Natural killer cell (primary cell): ENCODE measurements at regions of chr1 and their contacts with region 1.

Region 1: GRCh38 chr1:6602669-6603237 is at the start of gene KLHL21:
- DNase-seq: peak; percentile 90 to 92
- ATAC-seq: peak; percentile 65 to 87 (median 73)
- H3K4me3 ChIP-seq: peak within 1 kb of the TSS; percentile 82
- H3K4me3 Mint-ChIP-seq: peak within 1 kb of the TSS; percentile 98
- H3K27ac ChIP-seq: peak within 1 kb of the TSS; percentile 96
- H3K27ac Mint-ChIP-seq: peak within 1 kb of the TSS; percentile 93 to 99
- H3K4me1 ChIP-seq: peaks cover 44% of the 10 kb centered on the region
- H3K4me1 Mint-ChIP-seq: peaks cover 42% of the 10 kb centered on the region in 2 donors
- H3K27me3 ChIP-seq: no peaks in the 10 kb centered on the region
- H3K27me3 Mint-ChIP-seq: no peaks in the 10 kb centered on the region
- CTCF ChIP-seq: no peak
- total RNA-seq, gene KLHL21: 23.5 to 37.8 (median 28.9) TPM

Region 2: DNA sequence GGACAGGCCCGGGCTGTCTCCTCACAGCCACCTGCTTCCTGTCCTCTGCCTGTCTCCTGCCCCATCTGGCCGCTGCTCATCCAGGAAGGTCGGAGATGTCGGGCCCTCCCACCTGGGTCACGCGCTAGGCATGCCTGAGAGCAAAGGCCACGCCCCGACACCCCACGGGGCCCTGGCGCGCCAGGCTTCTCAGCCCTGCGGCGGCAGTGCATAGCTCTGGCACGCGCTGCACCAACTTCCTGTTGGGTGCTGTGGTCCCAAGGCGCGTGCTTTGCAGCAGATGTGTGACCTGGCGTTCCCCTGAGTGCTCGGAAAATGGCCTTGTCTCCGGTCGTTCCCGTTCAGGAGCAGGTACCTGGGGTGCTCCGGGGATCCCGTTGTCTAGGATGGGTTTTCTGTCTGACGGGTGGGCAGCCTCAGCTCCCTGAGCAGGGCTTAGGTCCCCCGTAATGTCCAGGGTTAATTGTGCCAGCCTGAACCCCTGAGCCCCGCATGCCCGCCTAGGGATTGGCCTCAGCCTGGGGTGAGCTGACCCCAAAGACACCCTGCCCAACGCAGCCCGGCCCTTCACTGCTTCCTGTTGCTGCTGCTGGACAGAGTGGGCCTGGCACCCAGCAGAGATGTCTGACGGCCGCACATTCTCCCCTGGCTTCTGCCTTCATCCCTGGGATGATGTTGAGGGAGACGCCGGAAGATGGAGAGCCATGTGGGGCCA is 576.5 kb before region 1 on chr1:
- intact Hi-C with region 1: loop called (anchors 5 kb)
- DNase-seq: peak; percentile 92 to 97
- ATAC-seq: peak; percentile 67 to 89 (median 84)
- H3K4me3 ChIP-seq: peak overlapping the region; percentile 55
- H3K4me3 Mint-ChIP-seq: peak overlapping the region; percentile 93
- H3K27ac ChIP-seq: peak overlapping the region; percentile 95
- H3K27ac Mint-ChIP-seq: peak overlapping the region; percentile 70 to 100
- H3K4me1 ChIP-seq: peaks cover 66% of the 10 kb centered on the region
- H3K4me1 Mint-ChIP-seq: peaks cover 58 to 72% of the 10 kb centered on the region in 2 donors
- H3K27me3 ChIP-seq: no peaks in the 10 kb centered on the region
- H3K27me3 Mint-ChIP-seq: peaks cover 0 to 3% of the 10 kb centered on the region in 2 donors
- CTCF ChIP-seq: no peak

Region 3: GRCh38 chr1:6245086-6245868 is 357.5 kb before region 1 on chr1:
- intact Hi-C with region 1: no loop called
- DNase-seq: peak; percentile 85 to 92
- ATAC-seq: peak; percentile 85 to 91 (median 87)
- H3K4me3 ChIP-seq: no peak overlapping the region
- H3K4me3 Mint-ChIP-seq: no peak overlapping the region
- H3K27ac ChIP-seq: no peak overlapping the region
- H3K27ac Mint-ChIP-seq: no peak overlapping the region
- H3K4me1 ChIP-seq: peaks cover 31% of the 10 kb centered on the region
- H3K4me1 Mint-ChIP-seq: peaks cover 5 to 16% of the 10 kb centered on the region in 2 donors
- H3K27me3 ChIP-seq: peaks cover 56% of the 10 kb centered on the region
- H3K27me3 Mint-ChIP-seq: peaks cover 20 to 43% of the 10 kb centered on the region in 2 donors
- CTCF ChIP-seq: peak; percentile 71

Region 4: DNA sequence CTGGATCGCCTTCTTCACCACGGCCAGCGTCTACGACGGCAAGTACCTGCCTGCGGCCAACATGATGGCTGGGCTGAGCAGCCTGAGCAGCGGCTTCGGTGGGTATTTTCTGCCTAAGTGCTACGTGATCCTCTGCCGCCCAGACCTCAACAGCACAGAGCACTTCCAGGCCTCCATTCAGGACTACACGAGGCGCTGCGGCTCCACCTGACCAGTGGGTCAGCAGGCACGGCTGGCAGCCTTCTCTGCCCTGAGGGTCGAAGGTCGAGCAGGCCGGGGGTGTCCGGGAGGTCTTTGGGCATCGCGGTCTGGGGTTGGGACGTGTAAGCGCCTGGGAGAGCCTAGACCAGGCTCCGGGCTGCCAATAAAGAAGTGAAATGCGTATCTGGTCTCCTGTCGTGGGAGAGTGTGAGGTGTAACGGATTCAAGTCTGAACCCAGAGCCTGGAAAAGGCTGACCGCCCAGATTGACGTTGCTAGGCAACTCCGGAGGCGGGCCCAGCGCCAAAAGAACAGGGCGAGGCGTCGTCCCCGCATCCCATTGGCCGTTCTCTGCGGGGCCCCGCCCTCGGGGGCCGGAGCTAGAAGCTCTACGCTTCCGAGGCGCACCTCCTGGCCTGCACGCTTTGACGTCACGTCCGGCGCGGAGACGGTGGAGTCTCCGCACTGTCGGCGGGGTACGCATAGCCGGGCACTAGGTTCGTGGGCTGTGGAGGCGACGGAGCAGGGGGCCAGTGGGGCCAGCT is 23.2 kb before region 1 on chr1 and contains the start of gene ZBTB48:
- intact Hi-C with region 1: loop called (anchors 1 kb)
- DNase-seq: peak; percentile 97 to 98
- ATAC-seq: peak; percentile 97 to 98 (median 97)
- H3K4me3 ChIP-seq: peak within 1 kb of the TSS; percentile 79
- H3K4me3 Mint-ChIP-seq: peak within 1 kb of the TSS; percentile 93
- H3K27ac ChIP-seq: peak within 1 kb of the TSS; percentile 82
- H3K27ac Mint-ChIP-seq: peak within 1 kb of the TSS; percentile 94 to 99
- H3K4me1 ChIP-seq: peaks cover 37% of the 10 kb centered on the region
- H3K4me1 Mint-ChIP-seq: peaks cover 11 to 39% of the 10 kb centered on the region in 2 donors
- H3K27me3 ChIP-seq: no peaks in the 10 kb centered on the region
- H3K27me3 Mint-ChIP-seq: no peaks in the 10 kb centered on the region
- CTCF ChIP-seq: no peak
- total RNA-seq, gene ZBTB48: 45.6 to 56.4 (median 54.0) TPM

Region 5: GRCh38 chr1:6613361-6614018 is 10.7 kb after region 1 on chr1 and contains the start of gene PHF13:
- intact Hi-C with region 1: loop called (anchors 1 kb)
- DNase-seq: peak; percentile 98 to 99
- ATAC-seq: peak; percentile 94 to 100 (median 96)
- H3K4me3 ChIP-seq: peak within 1 kb of the TSS; percentile 64
- H3K4me3 Mint-ChIP-seq: peak within 1 kb of the TSS; percentile 93
- H3K27ac ChIP-seq: peak within 1 kb of the TSS; percentile 61
- H3K27ac Mint-ChIP-seq: peak within 1 kb of the TSS; percentile 85 to 88
- H3K4me1 ChIP-seq: peaks cover 17% of the 10 kb centered on the region
- H3K4me1 Mint-ChIP-seq: peaks cover 7 to 14% of the 10 kb centered on the region in 2 donors
- H3K27me3 ChIP-seq: no peaks in the 10 kb centered on the region
- H3K27me3 Mint-ChIP-seq: no peaks in the 10 kb centered on the region
- CTCF ChIP-seq: no peak
- total RNA-seq, gene PHF13: 7.3 to 14.2 (median 10.9) TPM

Region 6: GRCh38 chr1:6784560-6785317 is 182.0 kb after region 1 on chr1:
- intact Hi-C with region 1: loop called (anchors 5 kb)
- DNase-seq: peak; percentile 99 to 100
- ATAC-seq: peak; percentile 77 to 92 (median 79)
- H3K4me3 ChIP-seq: peak overlapping the region; percentile 84
- H3K4me3 Mint-ChIP-seq: peak overlapping the region; percentile 94
- H3K27ac ChIP-seq: peak overlapping the region; percentile 95
- H3K27ac Mint-ChIP-seq: peak overlapping the region; percentile 90 to 95
- H3K4me1 ChIP-seq: peaks cover 9% of the 10 kb centered on the region
- H3K4me1 Mint-ChIP-seq: peaks cover 41 to 47% of the 10 kb centered on the region in 2 donors
- H3K27me3 ChIP-seq: no peaks in the 10 kb centered on the region
- H3K27me3 Mint-ChIP-seq: no peaks in the 10 kb centered on the region
- CTCF ChIP-seq: no peak